ENCODE measurements at regions of chr17 and their contacts with region 1.

Region 1: GRCh38 chr17:3712811-3713463 is 10.8 kb upstream of the HASPIN start:
- DNase-seq: no peak
- H3K4me3 ChIP-seq: no peak overlapping the region
- H3K27ac ChIP-seq: no peak overlapping the region
- H3K4me1 ChIP-seq: no peaks in the 10 kb centered on the region
- H3K27me3 ChIP-seq: no peaks in the 10 kb centered on the region
- CTCF ChIP-seq: no peak
- EP300 ChIP-seq: no peak
- POLR2A ChIP-seq: no peak
- RAD21 ChIP-seq: no peak

Region 2: DNA sequence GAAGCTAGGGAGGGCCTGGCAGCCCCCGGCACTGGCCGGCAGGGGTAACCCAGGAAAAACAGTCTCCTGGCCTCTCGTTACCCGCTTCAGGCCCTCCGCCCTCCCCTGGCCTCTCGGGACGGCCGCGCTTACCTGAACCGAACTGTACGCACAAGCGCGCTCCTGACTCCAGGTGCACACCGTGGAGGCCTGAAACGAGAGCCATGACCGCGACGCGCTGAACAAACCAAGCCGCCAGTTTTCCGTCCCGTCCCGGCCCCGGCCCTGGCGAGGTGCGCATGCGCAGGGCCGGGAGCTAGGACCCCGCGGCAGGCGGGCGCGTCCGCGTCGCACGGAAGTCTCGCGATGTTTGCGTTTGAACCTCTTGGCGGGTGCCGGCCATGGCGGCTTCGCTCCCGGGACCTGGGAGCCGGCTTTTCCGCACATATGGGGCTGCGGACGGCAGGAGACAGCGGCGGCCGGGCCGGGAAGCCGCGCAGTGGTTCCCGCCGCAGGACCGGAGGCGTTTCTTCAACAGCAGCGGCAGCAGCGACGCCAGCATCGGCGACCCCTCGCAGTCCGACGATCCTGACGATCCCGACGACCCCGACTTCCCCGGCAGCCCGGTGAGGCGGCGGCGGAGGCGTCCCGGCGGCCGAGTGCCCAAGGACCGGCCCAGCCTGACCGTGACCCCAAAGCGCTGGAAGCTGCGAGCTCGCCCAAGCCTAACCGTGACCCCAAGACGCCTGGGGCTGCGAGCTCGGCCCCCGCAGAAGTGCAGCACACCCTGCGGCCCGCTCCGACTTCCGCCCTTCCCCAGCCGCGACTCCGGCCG is 10.8 kb after region 1 on chr17 and contains the start of gene HASPIN:
- CTCF ChIA-PET with region 1: interaction called, 10 read pairs
- POLR2A ChIA-PET with region 1: interaction called, 11 read pairs
- DNase-seq: peak; percentile 70 to 95
- H3K4me3 ChIP-seq: peak within 1 kb of the TSS; percentile 67 to 84 (median 75)
- H3K27ac ChIP-seq: peak within 1 kb of the TSS; percentile 71
- H3K4me1 ChIP-seq: peaks cover 0 to 13% (median 8%) of the 10 kb centered on the region in 4 experiments; a peak in 4 of 7 replicates
- H3K27me3 ChIP-seq: no peaks in the 10 kb centered on the region
- CTCF ChIP-seq: peak in 2 of 3 experiments; percentile 4 to 17; a peak in 2 of 4 replicates
- EP300 ChIP-seq: no peak
- POLR2A ChIP-seq: peak; percentile 88 to 89
- RAD21 ChIP-seq: no peak
- total RNA-seq, gene HASPIN: 29.4 and 29.5 TPM in 2 replicates